Esophagus squamous epithelium (tissue), 5 donors: ENCODE measurements at regions of chr1 and their contacts with region 1.

Region 1: DNA sequence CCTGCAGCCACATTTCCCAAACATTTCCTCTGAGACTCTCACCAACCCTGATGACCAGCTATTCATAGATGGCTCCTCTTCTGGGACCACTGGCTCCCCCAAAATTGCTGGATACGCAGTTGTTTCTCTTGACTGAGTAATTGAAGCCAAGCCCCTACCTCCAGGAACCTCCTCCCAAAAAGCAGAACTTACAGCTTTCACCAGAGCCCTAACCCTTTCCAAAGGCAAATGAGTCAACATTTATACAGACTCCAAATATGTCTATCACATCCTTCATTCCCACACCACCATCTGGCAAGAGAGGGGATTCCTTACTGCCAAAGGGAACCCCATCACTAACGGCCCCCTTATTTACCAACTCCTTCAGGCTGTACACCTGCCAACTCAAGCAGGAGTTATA is 20.3 kb upstream of the CA6 start:
- DNase-seq: no peak
- H3K4me3 ChIP-seq: no peak overlapping the region
- H3K27ac ChIP-seq: no peak overlapping the region
- H3K4me1 ChIP-seq: no peaks in the 10 kb centered on the region
- H3K27me3 ChIP-seq: no peaks in the 10 kb centered on the region
- CTCF ChIP-seq: no peak
- POLR2A ChIP-seq: no peak

Region 2: GRCh38 chr1:8992936-8993687 is 67.7 kb after region 1 on chr1:
- intact Hi-C with region 1: loop called (anchors 5 kb)
- DNase-seq: no peak
- H3K4me3 ChIP-seq: no peak overlapping the region
- H3K27ac ChIP-seq: no peak overlapping the region
- H3K4me1 ChIP-seq: peaks cover 0 to 3% (median 0%) of the 10 kb centered on the region in 3 donors
- H3K27me3 ChIP-seq: no peaks in the 10 kb centered on the region
- CTCF ChIP-seq: peak in 1 of 6 experiments; percentile 26
- POLR2A ChIP-seq: no peak

Region 3: DNA sequence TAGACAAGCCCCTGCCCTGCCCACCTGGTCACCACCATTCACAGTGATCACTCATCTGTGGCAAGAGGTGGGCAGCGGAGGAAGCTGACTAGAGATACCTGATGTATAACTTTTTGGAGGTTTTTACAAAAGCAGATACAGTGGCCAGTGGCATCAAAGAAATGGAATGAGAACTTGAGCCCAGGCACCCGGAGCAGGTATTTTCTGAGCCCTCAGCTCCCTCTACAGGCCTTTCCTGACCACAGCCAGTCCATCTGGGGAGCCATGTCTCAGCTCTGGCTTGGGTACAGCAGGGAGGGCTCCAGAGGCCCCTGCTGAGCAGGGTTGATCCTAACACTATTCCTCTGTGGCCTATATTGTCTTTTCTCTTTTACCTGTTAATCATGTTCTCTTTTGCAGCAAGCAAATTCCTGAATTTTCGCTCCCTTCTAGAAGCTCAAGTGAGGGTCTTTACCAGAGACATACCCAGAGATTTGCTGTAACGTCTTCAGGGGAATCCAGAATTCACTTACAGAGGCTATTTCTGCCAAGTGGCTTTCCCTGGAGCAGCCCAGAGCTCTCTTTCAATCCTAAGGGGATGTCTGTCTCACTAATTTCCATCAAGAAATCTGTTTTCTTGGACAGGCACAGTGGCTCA is 176.2 kb after region 1 on chr1:
- intact Hi-C with region 1: loop called (anchors 10 kb)
- DNase-seq: no peak
- H3K4me3 ChIP-seq: no peak overlapping the region
- H3K27ac ChIP-seq: no peak overlapping the region
- H3K4me1 ChIP-seq: peaks cover 0 to 9% (median 0%) of the 10 kb centered on the region in 3 donors
- H3K27me3 ChIP-seq: no peaks in the 10 kb centered on the region
- CTCF ChIP-seq: peak; percentile 18 to 72 (median 58)
- POLR2A ChIP-seq: no peak